ENCODE measurements at regions of chr4 and their contacts with region 1.

Region 1: DNA sequence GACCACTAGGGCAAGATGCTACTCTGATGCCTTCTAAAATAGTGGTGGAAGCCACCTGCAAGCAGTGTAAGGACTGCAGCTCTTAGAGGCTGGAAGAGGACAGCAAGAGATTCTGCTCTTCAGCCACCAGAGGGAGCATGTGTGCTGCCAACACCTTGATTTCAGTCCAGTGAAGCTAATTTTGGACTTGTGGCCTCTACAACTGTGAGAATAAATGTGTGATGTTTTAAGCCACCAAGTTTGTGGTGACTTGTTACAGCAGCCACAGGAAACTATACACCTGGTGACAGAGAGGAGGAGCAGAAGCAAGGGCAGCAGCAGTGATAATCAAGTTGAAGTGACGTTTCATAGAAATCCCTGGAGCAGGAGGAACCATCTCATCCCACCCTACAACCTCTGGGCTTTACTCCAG is 55.9 kb downstream of the FGFBP1 start:
- DNase-seq: peak; percentile 16
- H3K4me3 ChIP-seq: no peak overlapping the region
- H3K27me3 ChIP-seq: peaks cover 4% of the 10 kb centered on the region; the same call in 1 of the 2 replicates
- CTCF ChIP-seq: peak; percentile 90

Region 2: DNA sequence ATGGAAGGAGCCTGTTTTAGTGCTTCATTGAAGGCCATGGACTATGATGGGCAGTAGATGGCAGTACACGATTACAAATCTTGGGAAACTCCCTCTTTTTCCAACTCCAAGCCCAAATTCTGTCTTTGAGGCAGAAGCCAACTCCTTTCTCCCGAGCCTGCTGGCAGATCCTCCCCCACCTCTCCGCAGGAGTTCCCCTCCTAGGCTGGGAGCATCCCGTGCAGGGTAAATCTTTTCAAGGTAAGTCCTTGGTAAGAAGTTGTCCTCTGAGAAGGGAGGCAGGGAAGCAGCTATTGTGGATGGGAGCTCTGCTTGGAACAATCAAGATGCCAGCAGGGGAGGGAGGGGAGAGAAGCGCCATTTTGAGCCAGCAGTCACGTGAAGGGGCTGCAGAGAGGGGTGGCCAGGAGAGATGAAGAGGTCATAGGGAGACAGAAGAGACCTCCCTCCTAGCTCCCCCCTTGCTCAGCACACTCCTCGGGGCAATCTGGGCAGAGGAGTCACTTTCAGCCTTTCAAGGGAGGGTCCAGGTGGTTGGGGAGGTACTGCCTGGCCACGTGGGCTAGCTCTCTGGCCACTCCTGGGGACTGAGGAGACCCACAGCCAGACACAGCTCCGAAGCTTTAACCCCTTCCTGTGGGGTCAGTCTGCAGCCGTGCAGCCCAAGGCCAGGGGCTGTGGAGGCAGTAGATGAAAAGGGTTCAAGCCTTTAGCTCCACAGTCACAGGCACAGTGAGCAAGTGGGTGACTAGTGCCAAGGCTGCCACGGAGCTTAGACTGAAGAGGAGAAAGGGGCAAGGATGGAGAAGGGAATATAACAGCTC is 403.4 kb before region 1 on chr4:
- CTCF ChIA-PET with region 1: interaction called, 27 read pairs
- POLR2A ChIA-PET with region 1: no interaction called
- DNase-seq: peak; percentile 56
- H3K4me3 ChIP-seq: peak overlapping the region; percentile 49
- H3K27me3 ChIP-seq: no peaks in the 10 kb centered on the region
- CTCF ChIP-seq: peak; percentile 77

Region 3: GRCh38 chr4:15893962-15894361 is 11.3 kb after region 1 on chr4:
- CTCF ChIA-PET with region 1: interaction called, 17 read pairs
- POLR2A ChIA-PET with region 1: no interaction called
- DNase-seq: peak; percentile 93
- H3K4me3 ChIP-seq: no peak overlapping the region
- H3K27me3 ChIP-seq: peaks cover 13% of the 10 kb centered on the region
- CTCF ChIP-seq: no peak

Region 4: DNA sequence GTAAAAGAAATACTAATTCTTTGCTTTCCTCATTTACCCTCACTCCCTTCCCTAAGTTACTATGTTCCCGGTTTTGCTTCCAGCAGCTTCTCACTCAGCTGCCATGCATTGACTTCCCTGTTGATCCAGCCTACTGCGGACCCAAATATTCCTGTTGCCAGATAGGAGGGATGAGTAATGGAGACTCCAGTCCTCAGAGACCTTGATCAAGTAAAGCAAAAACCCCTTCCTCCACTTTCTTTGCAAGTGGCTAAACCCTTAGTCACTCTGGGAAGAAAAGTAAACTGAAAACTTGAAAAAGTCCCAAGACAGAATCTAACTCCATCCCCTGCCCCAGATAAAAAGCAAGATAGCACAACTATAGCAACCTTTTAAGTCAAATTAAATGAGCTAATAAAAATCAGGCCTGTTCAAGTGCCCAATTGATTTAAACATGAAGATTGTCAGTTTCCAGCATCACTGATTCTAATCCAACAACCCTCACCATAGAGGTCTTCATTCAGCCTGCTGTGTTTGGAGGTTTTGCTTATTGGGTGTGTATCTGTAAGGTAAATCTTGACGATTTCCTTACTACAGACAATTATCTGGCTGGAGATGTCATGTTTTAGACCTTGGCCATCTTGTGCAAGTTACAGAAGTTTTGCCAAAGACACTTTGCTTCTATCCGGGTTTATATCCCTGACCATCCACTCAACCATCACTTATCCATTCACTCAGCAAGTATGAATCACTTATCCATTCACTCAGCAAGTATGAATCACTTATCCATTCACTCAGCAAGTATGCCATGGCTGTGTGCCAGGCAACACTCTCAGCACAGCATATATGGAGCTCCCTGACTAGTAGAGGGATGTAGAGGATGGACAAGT is 38.3 kb after region 1 on chr4:
- CTCF ChIA-PET with region 1: interaction called, 28 read pairs
- POLR2A ChIA-PET with region 1: no interaction called
- DNase-seq: peak; percentile 79
- H3K4me3 ChIP-seq: no peak overlapping the region
- H3K27me3 ChIP-seq: no peaks in the 10 kb centered on the region
- CTCF ChIP-seq: no peak

Region 5: DNA sequence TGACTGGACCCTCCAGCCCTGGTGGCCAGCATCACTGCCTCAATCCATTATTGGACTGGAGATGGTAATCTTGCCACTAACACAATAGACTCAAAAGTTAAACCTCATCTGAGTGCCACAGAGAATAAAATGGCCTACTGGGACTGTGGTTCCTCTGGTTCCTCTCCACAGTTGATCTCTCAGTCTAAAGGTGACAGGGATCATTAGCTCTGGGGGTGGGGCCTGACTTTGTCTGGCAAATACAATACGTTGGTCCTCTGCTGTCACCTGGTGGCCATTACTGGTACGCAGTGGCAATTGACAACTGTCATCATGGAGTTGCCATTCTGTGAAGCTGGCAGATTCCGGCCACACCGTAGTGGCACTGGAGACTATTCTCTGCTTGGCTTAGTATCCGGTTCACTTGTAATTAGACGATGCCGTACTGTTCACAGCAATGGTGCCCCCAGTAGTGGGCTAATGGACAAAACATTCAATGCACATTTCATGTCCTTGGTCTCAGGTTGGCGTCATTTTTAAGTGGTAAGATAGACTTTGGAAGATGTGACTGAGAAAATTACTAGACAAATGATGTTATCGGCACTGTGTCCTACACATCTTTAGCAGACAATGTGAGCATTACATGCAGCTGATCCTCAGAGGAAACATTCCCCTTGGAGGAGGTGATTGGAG is 73.6 kb after region 1 on chr4:
- CTCF ChIA-PET with region 1: interaction called, 192 read pairs
- POLR2A ChIA-PET with region 1: no interaction called
- DNase-seq: no peak
- H3K4me3 ChIP-seq: no peak overlapping the region
- H3K27me3 ChIP-seq: peaks cover 3% of the 10 kb centered on the region
- CTCF ChIP-seq: peak; percentile 98

Region 6: GRCh38 chr4:16001484-16001858 is 118.8 kb after region 1 on chr4:
- CTCF ChIA-PET with region 1: interaction called, 34 read pairs
- POLR2A ChIA-PET with region 1: interaction called, 3 read pairs
- DNase-seq: no peak
- H3K4me3 ChIP-seq: no peak overlapping the region
- H3K27me3 ChIP-seq: peaks cover 1% of the 10 kb centered on the region
- CTCF ChIP-seq: peak; percentile 87

Region 7: GRCh38 chr4:16351161-16351560 is 468.5 kb after region 1 on chr4:
- CTCF ChIA-PET with region 1: no interaction called
- POLR2A ChIA-PET with region 1: no interaction called
- DNase-seq: no peak
- H3K4me3 ChIP-seq: no peak overlapping the region
- H3K27me3 ChIP-seq: peaks cover 5% of the 10 kb centered on the region; the same call in 1 of the 2 replicates
- CTCF ChIP-seq: no peak

Measured in BJ (cell line).